ENCODE measurements at regions of chr7 and their contacts with region 1.

Region 1: DNA sequence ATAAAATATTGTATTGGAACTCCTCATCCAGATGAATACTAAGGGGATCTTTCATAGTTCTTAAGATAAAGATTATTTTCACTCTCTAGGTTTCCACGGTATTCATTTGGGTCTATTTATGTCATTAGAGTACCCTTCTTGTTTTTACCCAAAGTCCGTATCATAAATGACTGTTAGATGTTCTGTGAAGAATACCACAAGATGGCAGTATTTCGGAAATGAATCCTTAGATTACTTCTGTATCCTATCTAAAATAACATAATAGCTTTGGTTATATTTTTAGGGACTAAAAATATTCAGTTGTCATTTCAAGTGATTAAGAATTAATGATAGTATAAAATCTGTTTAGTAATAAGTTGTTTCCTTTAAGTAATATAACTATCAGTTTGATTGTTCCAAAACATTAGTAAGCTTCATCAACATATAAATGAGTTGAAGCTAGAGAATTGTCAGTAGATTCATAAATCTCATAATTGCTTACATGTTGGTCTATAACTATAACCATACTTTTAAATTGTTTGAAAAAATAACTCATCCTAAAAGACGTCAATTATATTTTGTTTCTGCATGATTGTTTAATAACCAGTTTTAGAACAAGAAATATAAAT is 337.5 kb upstream of the KCND2 start:
- H3K4me3 ChIP-seq: no peak overlapping the region
- H3K27ac ChIP-seq: no peak overlapping the region
- H3K4me1 ChIP-seq: no peaks in the 10 kb centered on the region
- CTCF ChIP-seq: no peak

Region 2: DNA sequence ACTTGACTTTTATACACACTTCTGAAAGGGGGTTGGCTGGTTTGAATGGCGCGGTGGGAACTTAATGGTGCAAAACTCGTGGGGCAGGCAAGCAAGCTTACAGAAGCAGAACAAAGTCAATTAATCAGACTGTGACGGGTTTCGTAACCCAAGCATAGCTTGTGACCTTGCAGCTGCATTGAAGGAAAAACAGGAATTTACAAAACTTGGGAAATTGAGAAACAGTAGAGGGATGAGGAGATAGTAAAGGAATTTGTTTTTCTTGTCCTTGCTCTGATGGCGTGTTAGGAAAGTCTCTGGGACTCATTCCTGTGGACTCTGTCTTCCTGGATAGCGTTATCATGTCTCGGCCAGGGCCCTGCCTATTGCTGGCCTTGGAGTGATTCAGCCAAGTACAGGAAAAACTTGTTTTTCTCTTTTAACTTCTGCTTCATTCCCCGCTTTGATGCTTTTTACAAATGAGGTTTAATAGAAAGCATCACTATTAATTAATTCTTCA is 117.4 kb after region 1 on chr7:
- CTCF ChIA-PET with region 1: no interaction called
- POLR2A ChIA-PET with region 1: no interaction called
- H3K4me3 ChIP-seq: no peak overlapping the region
- H3K27ac ChIP-seq: no peak overlapping the region
- H3K4me1 ChIP-seq: no peaks in the 10 kb centered on the region
- CTCF ChIP-seq: no peak

Region 3: GRCh38 chr7:120272261-120272660 is 336.7 kb after region 1 on chr7:
- CTCF ChIA-PET with region 1: interaction called, 11 read pairs
- POLR2A ChIA-PET with region 1: no interaction called
- H3K4me3 ChIP-seq: peak overlapping the region; percentile 42
- H3K27ac ChIP-seq: no peak overlapping the region
- H3K4me1 ChIP-seq: no peaks in the 10 kb centered on the region
- CTCF ChIP-seq: peak; percentile 53; the same call in 1 of the 2 replicates

Region 4: DNA sequence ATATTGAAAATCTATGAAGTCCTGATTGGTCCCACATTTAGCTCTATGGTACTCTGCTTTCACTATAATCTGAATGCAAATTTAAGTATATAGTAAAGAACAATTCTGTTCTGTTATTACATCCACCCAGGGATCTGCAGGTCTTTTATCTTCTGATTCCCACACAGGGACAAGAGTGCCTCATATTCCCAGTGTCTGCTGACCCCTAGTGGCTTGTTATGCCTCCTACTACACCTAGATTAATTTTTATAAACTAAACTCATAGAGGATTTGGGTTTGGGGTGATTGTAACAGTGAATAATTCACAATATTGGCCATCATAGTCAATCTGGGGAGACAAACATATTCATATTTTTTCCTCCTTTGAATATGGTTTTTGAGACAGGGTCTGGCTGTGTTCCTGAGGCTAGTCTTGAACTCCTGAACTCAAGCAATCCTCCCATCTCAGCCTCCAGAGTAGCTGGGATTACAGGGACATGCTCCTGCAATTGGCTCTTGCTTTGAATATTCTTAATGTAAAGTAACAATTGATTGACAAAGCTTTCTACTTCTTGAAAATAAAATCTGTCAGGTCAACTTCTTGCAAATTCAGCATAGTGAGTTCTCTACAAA is 619.5 kb after region 1 on chr7:
- CTCF ChIA-PET with region 1: interaction called, 42 read pairs
- POLR2A ChIA-PET with region 1: no interaction called
- H3K4me3 ChIP-seq: no peak overlapping the region
- H3K27ac ChIP-seq: no peak overlapping the region
- H3K4me1 ChIP-seq: 0 out of 2 replicates have a peak, but pooled peaks cover 2% of the 10 kb centered on the region
- CTCF ChIP-seq: peak; percentile 17; the same call in 1 of the 2 replicates